ENCODE measurements at regions of chr2 and their contacts with region 1.

Region 1: DNA sequence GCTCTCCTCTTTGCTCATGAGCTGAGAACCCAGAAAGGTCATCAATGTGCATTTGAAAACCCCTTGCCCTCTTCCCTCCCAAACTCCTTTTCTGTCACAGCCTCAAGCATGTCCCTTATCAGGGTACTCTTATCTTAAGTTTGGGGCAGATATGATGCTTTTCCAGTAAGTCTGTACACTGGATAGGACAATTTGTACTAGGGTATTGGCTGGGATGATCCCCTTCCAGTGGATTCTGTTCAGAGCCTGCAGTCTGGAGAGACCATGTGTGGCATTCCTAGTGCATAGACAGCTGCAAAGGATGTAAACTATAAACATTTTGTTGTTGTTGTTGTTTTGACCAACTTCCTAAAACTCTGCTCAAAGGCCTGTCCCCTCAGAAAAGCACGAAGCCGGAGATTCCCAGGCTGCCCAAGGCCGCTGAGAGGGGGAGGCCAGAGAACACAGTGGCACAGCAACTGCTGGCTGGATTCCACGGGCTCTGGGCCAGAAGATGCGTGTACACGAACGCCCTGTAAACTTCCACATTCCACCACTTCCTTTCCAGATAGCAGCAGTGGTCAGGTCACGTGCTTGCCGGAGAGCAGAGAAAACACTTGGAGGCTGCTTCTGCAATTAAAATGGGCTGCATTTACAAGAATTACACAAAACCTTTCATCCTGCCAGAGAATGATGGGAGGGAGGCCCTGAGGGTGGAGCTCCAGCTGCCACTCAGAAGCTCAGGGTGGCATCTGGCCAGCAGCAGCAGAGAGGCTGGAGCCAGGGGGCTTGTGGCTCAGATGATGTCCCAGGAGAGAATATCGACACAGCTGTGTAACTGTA is 42.1 kb downstream of the BMP10 start:
- DNase-seq: peak; percentile 43 to 87 (median 79)
- ATAC-seq: peak; percentile 76
- H3K4me3 ChIP-seq: peak overlapping the region; percentile 15
- H3K4me3 Mint-ChIP-seq: peak overlapping the region; percentile 67 to 89 (median 78)
- H3K27ac ChIP-seq: peak overlapping the region; percentile 61
- H3K27ac Mint-ChIP-seq: peak overlapping the region; percentile 84 to 98 (median 94)
- H3K4me1 ChIP-seq: peaks cover 32 to 51% of the 10 kb centered on the region in 2 donors
- H3K4me1 Mint-ChIP-seq: peaks cover 59 to 85% (median 71%) of the 10 kb centered on the region in 7 donors
- H3K27me3 ChIP-seq: no peaks in the 10 kb centered on the region
- H3K27me3 Mint-ChIP-seq: no peaks in the 10 kb centered on the region

Region 2: DNA sequence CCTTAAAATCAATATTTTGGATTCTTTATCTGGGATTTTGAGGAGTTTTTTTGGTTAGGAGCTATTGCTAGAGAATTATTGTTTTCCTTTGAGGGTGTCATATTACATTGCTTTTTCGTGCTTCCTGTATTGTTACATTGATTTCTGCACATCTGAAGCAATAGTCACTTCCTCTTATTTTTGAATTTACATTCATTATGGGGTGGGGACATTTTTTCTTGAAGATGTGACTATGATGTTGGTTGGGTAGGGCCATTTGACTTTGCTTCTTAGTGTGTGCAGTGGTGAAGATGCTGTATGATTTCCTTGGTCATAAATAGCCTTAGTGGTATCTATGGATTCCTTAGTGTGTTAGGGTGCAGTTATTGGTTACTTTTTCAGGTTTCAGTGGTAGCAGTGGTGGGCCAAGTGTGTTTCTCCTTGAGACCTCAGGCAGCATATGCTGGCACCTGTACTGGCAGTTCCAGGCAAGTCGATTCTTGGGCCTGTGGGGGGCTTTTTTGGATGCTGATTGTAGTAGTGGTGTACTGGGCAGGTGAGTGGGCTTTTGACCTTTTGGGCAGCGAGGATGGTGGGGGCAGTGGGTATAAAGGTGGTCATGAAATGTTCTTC is 32.7 kb before region 1 on chr2:
- CTCF ChIA-PET with region 1: interaction called, 3 read pairs
- POLR2A ChIA-PET with region 1: interaction called, 4 read pairs
- intact Hi-C with region 1: loop called in 1 of 2 experiments (anchors 2 kb)
- DNase-seq: peak in 6 of 9 donors; percentile 33 to 62 (median 54)
- ATAC-seq: peak; percentile 73
- H3K4me3 ChIP-seq: peak overlapping the region; percentile 15
- H3K4me3 Mint-ChIP-seq: peak overlapping the region; percentile 62 to 86 (median 72)
- H3K27ac ChIP-seq: peak overlapping the region; percentile 44
- H3K27ac Mint-ChIP-seq: peak overlapping the region; percentile 83 to 98 (median 88)
- H3K4me1 ChIP-seq: peaks cover 52 to 60% of the 10 kb centered on the region in 2 donors
- H3K4me1 Mint-ChIP-seq: peaks cover 64 to 92% (median 82%) of the 10 kb centered on the region in 7 donors
- H3K27me3 ChIP-seq: no peaks in the 10 kb centered on the region
- H3K27me3 Mint-ChIP-seq: no peaks in the 10 kb centered on the region

Region 3: GRCh38 chr2:68807821-68808266 is 21.3 kb before region 1 on chr2:
- CTCF ChIA-PET with region 1: interaction called, 3 read pairs
- POLR2A ChIA-PET with region 1: no interaction called
- intact Hi-C with region 1: loop called in 1 of 2 experiments (anchors 2 kb)
- DNase-seq: no peak
- ATAC-seq: peak; percentile 64
- H3K4me3 ChIP-seq: no peak overlapping the region
- H3K4me3 Mint-ChIP-seq: peak overlapping the region in 6 of 10 donors; percentile 2 to 39 (median 24)
- H3K27ac ChIP-seq: peak overlapping the region; percentile 59
- H3K27ac Mint-ChIP-seq: peak overlapping the region; percentile 60 to 92 (median 77)
- H3K4me1 ChIP-seq: peaks cover 16 to 26% of the 10 kb centered on the region in 2 donors
- H3K4me1 Mint-ChIP-seq: peaks cover 30 to 84% (median 66%) of the 10 kb centered on the region in 7 donors
- H3K27me3 ChIP-seq: no peaks in the 10 kb centered on the region
- H3K27me3 Mint-ChIP-seq: no peaks in the 10 kb centered on the region

Measured in naive thymus-derived CD4-positive, alpha-beta T cell (primary cell).